Thyroid gland (tissue), 4 donors: ENCODE measurements at regions of chr9 and their contacts with region 1.

Region 1: GRCh38 chr9:113993838-113994540 is 84.1 kb downstream of the AMBP start:
- DNase-seq: peak; percentile 97 to 98
- H3K4me3 ChIP-seq: no peak overlapping the region
- H3K27ac ChIP-seq: peak overlapping the region in 1 of 3 donors; percentile 18
- H3K4me1 ChIP-seq: peaks cover 36 to 51% of the 10 kb centered on the region in 2 donors
- H3K27me3 ChIP-seq: no peaks in the 10 kb centered on the region
- CTCF ChIP-seq: peak in 1 of 6 experiments; percentile 21
- POLR2A ChIP-seq: peak in 1 of 2 donors; percentile 17

Region 2: GRCh38 chr9:113705928-113706519 is 288.0 kb before region 1 on chr9:
- intact Hi-C with region 1: no loop called
- DNase-seq: peak; percentile 32 to 44
- H3K4me3 ChIP-seq: no peak overlapping the region
- H3K27ac ChIP-seq: peak overlapping the region; percentile 27 to 73 (median 66)
- H3K4me1 ChIP-seq: peaks cover 24 to 27% of the 10 kb centered on the region in 2 donors
- H3K27me3 ChIP-seq: no peaks in the 10 kb centered on the region
- CTCF ChIP-seq: no peak
- POLR2A ChIP-seq: no peak

Region 3: DNA sequence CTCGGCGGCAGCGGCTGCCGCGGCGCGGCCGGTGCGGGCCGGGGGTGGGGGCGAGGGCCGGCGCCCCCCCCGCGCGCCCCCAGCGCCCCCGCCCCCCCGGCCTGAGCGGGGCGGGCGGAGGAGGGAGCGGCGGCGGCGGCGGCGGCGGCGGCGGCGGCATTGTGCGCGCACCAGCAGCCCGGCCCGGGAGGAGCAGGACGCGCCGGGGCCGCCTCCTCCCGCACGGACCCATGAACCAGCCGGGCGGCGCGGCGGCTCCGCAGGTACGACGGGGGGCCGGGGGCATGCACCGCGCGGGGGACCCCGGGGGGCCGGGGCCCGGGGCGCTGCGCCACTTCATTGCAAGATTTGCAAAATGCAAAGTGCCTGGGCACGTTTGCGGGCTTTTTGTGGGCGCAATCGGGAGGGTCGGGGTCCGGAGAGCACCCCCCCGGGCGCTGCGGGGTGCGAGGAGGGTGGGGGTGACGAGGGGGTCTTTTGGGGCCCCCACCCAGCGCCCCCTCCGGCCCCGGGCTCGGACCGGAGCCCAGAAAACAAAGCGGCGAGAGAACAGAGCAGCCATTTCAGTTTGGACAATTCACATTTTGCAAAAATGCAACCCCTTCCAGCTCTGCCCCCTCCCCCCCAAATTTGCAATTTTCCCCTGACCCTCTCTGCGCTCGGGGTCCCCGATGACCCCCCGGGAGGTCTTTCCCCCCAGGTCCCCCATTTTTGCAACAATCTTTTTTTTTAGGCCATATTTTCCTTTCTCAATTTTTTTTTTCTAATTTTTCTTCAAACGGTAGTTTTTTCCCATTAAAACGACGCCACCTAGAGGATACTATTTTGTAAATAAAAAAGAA is 117.6 kb before region 1 on chr9 and contains the start of gene ZNF618:
- intact Hi-C with region 1: loop called (anchors 10 kb)
- DNase-seq: peak in 1 of 2 donors; percentile 37
- H3K4me3 ChIP-seq: peak within 1 kb of the TSS; percentile 39 to 99 (median 95)
- H3K27ac ChIP-seq: peak within 1 kb of the TSS; percentile 88 to 90 (median 90)
- H3K4me1 ChIP-seq: peaks cover 23 to 26% of the 10 kb centered on the region in 2 donors
- H3K27me3 ChIP-seq: no peaks in the 10 kb centered on the region
- CTCF ChIP-seq: peak in 5 of 6 experiments; percentile 38 to 73 (median 60)
- POLR2A ChIP-seq: peak in 1 of 2 donors; percentile 19
- total RNA-seq, gene ZNF618: 9.9 to 17.5 (median 15.5) TPM

Region 4: DNA sequence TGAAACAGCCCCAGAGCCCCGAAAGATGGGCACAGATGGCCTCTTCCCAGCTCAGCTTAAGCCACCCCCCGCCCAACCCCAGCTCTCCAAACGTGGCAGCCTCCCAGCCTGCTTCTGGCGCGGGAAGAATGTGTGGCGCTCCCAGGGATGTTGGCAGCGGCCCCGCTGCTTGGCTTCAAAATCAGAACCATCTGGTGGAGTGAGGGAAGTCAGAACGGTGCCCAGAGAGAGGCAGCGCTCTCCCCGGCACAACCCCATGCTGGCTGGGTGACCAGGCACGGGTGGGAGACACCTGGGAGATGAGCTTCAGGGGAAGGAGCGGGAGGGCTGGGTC is 256.2 kb after region 1 on chr9:
- intact Hi-C with region 1: no loop called
- DNase-seq: peak; percentile 84 to 93
- H3K4me3 ChIP-seq: no peak overlapping the region
- H3K27ac ChIP-seq: no peak overlapping the region
- H3K4me1 ChIP-seq: peaks cover 5 to 11% of the 10 kb centered on the region in 2 donors
- H3K27me3 ChIP-seq: no peaks in the 10 kb centered on the region
- CTCF ChIP-seq: no peak
- POLR2A ChIP-seq: no peak